ENCODE measurements at regions of chr20 and their contacts with region 1.

Region 1: GRCh38 chr20:11676630-11677284 is 240.9 kb upstream of the BTBD3 start:
- DNase-seq: peak in 2 of 14 experiments; percentile 3 to 8
- ATAC-seq: no peak
- H3K4me3 ChIP-seq: no peak overlapping the region
- H3K4me3 Mint-ChIP-seq: no peak overlapping the region
- H3K27ac ChIP-seq: no peak overlapping the region
- H3K27ac Mint-ChIP-seq: no peak overlapping the region
- H3K4me1 ChIP-seq: no peaks in the 10 kb centered on the region
- H3K4me1 Mint-ChIP-seq: no peaks in the 10 kb centered on the region
- H3K27me3 ChIP-seq: no peaks in the 10 kb centered on the region
- H3K27me3 Mint-ChIP-seq: no peaks in the 10 kb centered on the region
- CTCF ChIP-seq: peak; percentile 11

Region 2: GRCh38 chr20:11712639-11713160 is 35.9 kb after region 1 on chr20:
- CTCF ChIA-PET with region 1: no interaction called
- POLR2A ChIA-PET with region 1: no interaction called
- intact Hi-C with region 1: no loop called
- DNase-seq: no peak
- ATAC-seq: no peak
- H3K4me3 ChIP-seq: no peak overlapping the region
- H3K4me3 Mint-ChIP-seq: no peak overlapping the region
- H3K27ac ChIP-seq: no peak overlapping the region
- H3K27ac Mint-ChIP-seq: no peak overlapping the region
- H3K4me1 ChIP-seq: no peaks in the 10 kb centered on the region
- H3K4me1 Mint-ChIP-seq: no peaks in the 10 kb centered on the region
- H3K27me3 ChIP-seq: no peaks in the 10 kb centered on the region
- H3K27me3 Mint-ChIP-seq: no peaks in the 10 kb centered on the region
- CTCF ChIP-seq: no peak

Region 3: GRCh38 chr20:11734431-11734830 is 57.7 kb after region 1 on chr20:
- CTCF ChIA-PET with region 1: no interaction called
- POLR2A ChIA-PET with region 1: no interaction called
- intact Hi-C with region 1: loop called in 1 of 2 experiments (anchors 10 kb)
- DNase-seq: no peak
- ATAC-seq: no peak
- H3K4me3 ChIP-seq: no peak overlapping the region
- H3K4me3 Mint-ChIP-seq: no peak overlapping the region
- H3K27ac ChIP-seq: no peak overlapping the region
- H3K27ac Mint-ChIP-seq: no peak overlapping the region
- H3K4me1 ChIP-seq: no peaks in the 10 kb centered on the region
- H3K4me1 Mint-ChIP-seq: no peaks in the 10 kb centered on the region
- H3K27me3 ChIP-seq: no peaks in the 10 kb centered on the region
- H3K27me3 Mint-ChIP-seq: no peaks in the 10 kb centered on the region
- CTCF ChIP-seq: no peak

Region 4: GRCh38 chr20:13105864-13106457 is 1429.2 kb after region 1 on chr20:
- CTCF ChIA-PET with region 1: no interaction called
- POLR2A ChIA-PET with region 1: no interaction called
- intact Hi-C with region 1: loop called in 1 of 2 experiments (anchors 5 kb)
- DNase-seq: peak in 3 of 14 experiments; percentile 15 to 35 (median 24)
- ATAC-seq: no peak
- H3K4me3 ChIP-seq: no peak overlapping the region
- H3K4me3 Mint-ChIP-seq: no peak overlapping the region
- H3K27ac ChIP-seq: no peak overlapping the region
- H3K27ac Mint-ChIP-seq: no peak overlapping the region
- H3K4me1 ChIP-seq: no peaks in the 10 kb centered on the region
- H3K4me1 Mint-ChIP-seq: no peaks in the 10 kb centered on the region
- H3K27me3 ChIP-seq: no peaks in the 10 kb centered on the region
- H3K27me3 Mint-ChIP-seq: no peaks in the 10 kb centered on the region
- CTCF ChIP-seq: peak; percentile 70

Measured in CD4-positive, alpha-beta T cell (primary cell).